GM12878 (cell line): ENCODE measurements at regions of chr5 and their contacts with region 1.

Region 1: GRCh38 chr5:126776497-126777256 is at the start of gene LMNB1:
- DNase-seq: peak; percentile 83
- ATAC-seq: peak; percentile 80
- H3K4me3 ChIP-seq: peak within 1 kb of the TSS; percentile 96
- H3K27ac ChIP-seq: peak within 1 kb of the TSS; percentile 96
- H3K4me1 ChIP-seq: no peaks in the 10 kb centered on the region
- H3K27me3 ChIP-seq: no peaks in the 10 kb centered on the region
- CTCF ChIP-seq: no peak
- EP300 ChIP-seq: 0 out of 4 replicates have a peak, but pooled peaks have one; percentile 16 to 55
- POLR2A ChIP-seq: peak; percentile 70
- RAD21 ChIP-seq: 0 out of 2 replicates have a peak, but pooled peaks have one; percentile 18
- polyA plus RNA-seq, gene LMNB1: 7.0 to 7.1 TPM

Region 2: DNA sequence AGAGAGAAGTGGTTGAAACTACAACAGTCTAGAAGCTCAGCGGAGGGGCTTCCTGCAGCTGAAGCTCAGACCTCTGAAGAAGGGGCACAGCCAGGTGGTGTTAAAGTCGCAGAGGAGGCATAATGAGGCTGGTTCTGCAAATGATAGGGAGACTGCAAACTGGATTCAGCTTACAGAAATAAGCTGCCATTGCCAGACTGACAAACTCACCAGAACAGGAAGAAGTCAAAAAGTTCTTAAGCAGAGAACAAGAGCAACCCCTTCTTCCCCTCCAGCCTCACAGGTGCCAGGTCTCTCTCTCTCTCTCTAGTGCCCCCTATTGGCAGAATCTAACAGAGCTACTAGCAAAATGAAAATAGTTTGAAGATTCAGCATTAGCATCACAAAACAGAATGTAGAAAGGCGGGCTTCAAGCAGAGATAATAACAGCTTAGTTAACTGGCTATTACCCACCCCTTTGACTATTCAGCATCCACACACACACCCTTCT is 276.8 kb before region 1 on chr5:
- CTCF ChIA-PET with region 1: no interaction called
- POLR2A ChIA-PET with region 1: no interaction called
- RAD21 ChIA-PET with region 1: no interaction called
- SMC1A ChIA-PET with region 1: no interaction called
- in situ Hi-C with region 1: no loop called
- intact Hi-C with region 1: no loop called
- DNase-seq: no peak
- ATAC-seq: peak; percentile 84
- H3K4me3 ChIP-seq: no peak overlapping the region
- H3K27ac ChIP-seq: no peak overlapping the region
- H3K4me1 ChIP-seq: no peaks in the 10 kb centered on the region
- H3K27me3 ChIP-seq: no peaks in the 10 kb centered on the region
- CTCF ChIP-seq: peak; percentile 54 to 69 (median 69)
- EP300 ChIP-seq: no peak
- POLR2A ChIP-seq: no peak
- RAD21 ChIP-seq: peak; percentile 74

Region 3: GRCh38 chr5:126600631-126601511 is 175.8 kb before region 1 on chr5 and contains the start of gene PHAX:
- CTCF ChIA-PET with region 1: interaction called, 10 read pairs
- POLR2A ChIA-PET with region 1: interaction called, 3 read pairs
- RAD21 ChIA-PET with region 1: interaction called, 7 read pairs
- SMC1A ChIA-PET with region 1: no interaction called
- in situ Hi-C with region 1: no loop called
- intact Hi-C with region 1: no loop called
- DNase-seq: peak; percentile 32
- ATAC-seq: peak; percentile 95
- H3K4me3 ChIP-seq: peak within 1 kb of the TSS; percentile 92
- H3K27ac ChIP-seq: peak within 1 kb of the TSS; percentile 69
- H3K4me1 ChIP-seq: no peaks in the 10 kb centered on the region; the same call in 1 of the 2 replicates
- H3K27me3 ChIP-seq: no peaks in the 10 kb centered on the region
- CTCF ChIP-seq: peak; percentile 72 to 89 (median 85)
- EP300 ChIP-seq: no peak
- POLR2A ChIP-seq: peak; percentile 94
- RAD21 ChIP-seq: 0 out of 2 replicates have a peak, but pooled peaks have one; percentile 10
- polyA plus RNA-seq, gene PHAX: 60.8 to 71.5 TPM

Region 4: GRCh38 chr5:126686451-126687126 is 90.1 kb before region 1 on chr5:
- CTCF ChIA-PET with region 1: interaction called, 445 read pairs
- POLR2A ChIA-PET with region 1: interaction called, 131 read pairs
- RAD21 ChIA-PET with region 1: interaction called, 306 read pairs
- SMC1A ChIA-PET with region 1: interaction called, 441 read pairs
- in situ Hi-C with region 1: no loop called
- intact Hi-C with region 1: no loop called
- DNase-seq: peak; percentile 15
- ATAC-seq: peak; percentile 68
- H3K4me3 ChIP-seq: no peak overlapping the region
- H3K27ac ChIP-seq: no peak overlapping the region
- H3K4me1 ChIP-seq: peaks cover 9% of the 10 kb centered on the region
- H3K27me3 ChIP-seq: no peaks in the 10 kb centered on the region
- CTCF ChIP-seq: no peak
- EP300 ChIP-seq: peak in 1 of 2 experiments; percentile 32; a peak in 1 of 4 replicates
- POLR2A ChIP-seq: no peak
- RAD21 ChIP-seq: no peak

Region 5: GRCh38 chr5:126736141-126736540 is 40.5 kb before region 1 on chr5:
- CTCF ChIA-PET with region 1: interaction called, 17 read pairs
- POLR2A ChIA-PET with region 1: interaction called, 23 read pairs
- RAD21 ChIA-PET with region 1: interaction called, 48 read pairs
- SMC1A ChIA-PET with region 1: interaction called, 26 read pairs
- in situ Hi-C with region 1: no loop called
- intact Hi-C with region 1: loop called (anchors 5 kb)
- DNase-seq: no peak
- ATAC-seq: peak; percentile 28; the same call in 2 of the 3 replicates
- H3K4me3 ChIP-seq: no peak overlapping the region
- H3K27ac ChIP-seq: no peak overlapping the region
- H3K4me1 ChIP-seq: 0 out of 2 replicates have a peak, but pooled peaks cover 6% of the 10 kb centered on the region
- H3K27me3 ChIP-seq: no peaks in the 10 kb centered on the region
- CTCF ChIP-seq: no peak
- EP300 ChIP-seq: no peak
- POLR2A ChIP-seq: no peak
- RAD21 ChIP-seq: no peak

Region 6: DNA sequence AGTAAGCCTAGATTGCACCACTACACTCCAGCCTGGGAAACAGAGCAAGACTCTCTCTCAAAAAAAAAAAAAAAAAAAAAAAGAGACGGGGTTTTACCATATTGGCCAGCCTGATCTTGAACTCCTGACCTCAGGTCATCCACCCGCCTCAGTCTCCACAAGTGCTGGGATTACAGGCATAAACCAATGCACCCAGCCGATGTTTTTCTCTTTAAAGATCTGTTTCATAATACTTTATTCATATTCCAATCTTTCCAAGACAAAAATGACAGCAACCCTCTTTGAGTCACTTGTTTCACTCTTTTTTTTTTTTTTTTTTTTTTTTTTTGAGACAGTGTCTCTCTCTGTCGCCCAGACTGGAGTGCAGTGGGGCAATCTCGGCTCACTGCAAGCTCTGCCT is 13.3 kb before region 1 on chr5:
- CTCF ChIA-PET with region 1: interaction called, 136 read pairs
- POLR2A ChIA-PET with region 1: interaction called, 140 read pairs
- RAD21 ChIA-PET with region 1: interaction called, 31 read pairs
- SMC1A ChIA-PET with region 1: interaction called, 119 read pairs
- in situ Hi-C with region 1: no loop called
- intact Hi-C with region 1: loop called (anchors 1 kb)
- DNase-seq: no peak
- ATAC-seq: no peak
- H3K4me3 ChIP-seq: no peak overlapping the region
- H3K27ac ChIP-seq: peak overlapping the region; percentile 86
- H3K4me1 ChIP-seq: peaks cover 24% of the 10 kb centered on the region
- H3K27me3 ChIP-seq: no peaks in the 10 kb centered on the region
- CTCF ChIP-seq: no peak
- EP300 ChIP-seq: no peak
- POLR2A ChIP-seq: no peak
- RAD21 ChIP-seq: no peak

Region 7: GRCh38 chr5:126808521-126808988 is 31.9 kb after region 1 on chr5:
- CTCF ChIA-PET with region 1: interaction called, 54 read pairs
- POLR2A ChIA-PET with region 1: interaction called, 17 read pairs
- RAD21 ChIA-PET with region 1: interaction called, 67 read pairs
- SMC1A ChIA-PET with region 1: interaction called, 20 read pairs
- in situ Hi-C with region 1: no loop called
- intact Hi-C with region 1: no loop called
- DNase-seq: no peak
- ATAC-seq: peak; percentile 68
- H3K4me3 ChIP-seq: no peak overlapping the region
- H3K27ac ChIP-seq: no peak overlapping the region; the same call in 1 of the 2 replicates
- H3K4me1 ChIP-seq: no peaks in the 10 kb centered on the region
- H3K27me3 ChIP-seq: no peaks in the 10 kb centered on the region
- CTCF ChIP-seq: peak; percentile 29 to 41 (median 40); a peak in 4 of 6 replicates
- EP300 ChIP-seq: no peak
- POLR2A ChIP-seq: no peak
- RAD21 ChIP-seq: peak; percentile 66